Psoas muscle (tissue), 8 donors: ENCODE measurements at regions of chr12 and their contacts with region 1.

Region 1: DNA sequence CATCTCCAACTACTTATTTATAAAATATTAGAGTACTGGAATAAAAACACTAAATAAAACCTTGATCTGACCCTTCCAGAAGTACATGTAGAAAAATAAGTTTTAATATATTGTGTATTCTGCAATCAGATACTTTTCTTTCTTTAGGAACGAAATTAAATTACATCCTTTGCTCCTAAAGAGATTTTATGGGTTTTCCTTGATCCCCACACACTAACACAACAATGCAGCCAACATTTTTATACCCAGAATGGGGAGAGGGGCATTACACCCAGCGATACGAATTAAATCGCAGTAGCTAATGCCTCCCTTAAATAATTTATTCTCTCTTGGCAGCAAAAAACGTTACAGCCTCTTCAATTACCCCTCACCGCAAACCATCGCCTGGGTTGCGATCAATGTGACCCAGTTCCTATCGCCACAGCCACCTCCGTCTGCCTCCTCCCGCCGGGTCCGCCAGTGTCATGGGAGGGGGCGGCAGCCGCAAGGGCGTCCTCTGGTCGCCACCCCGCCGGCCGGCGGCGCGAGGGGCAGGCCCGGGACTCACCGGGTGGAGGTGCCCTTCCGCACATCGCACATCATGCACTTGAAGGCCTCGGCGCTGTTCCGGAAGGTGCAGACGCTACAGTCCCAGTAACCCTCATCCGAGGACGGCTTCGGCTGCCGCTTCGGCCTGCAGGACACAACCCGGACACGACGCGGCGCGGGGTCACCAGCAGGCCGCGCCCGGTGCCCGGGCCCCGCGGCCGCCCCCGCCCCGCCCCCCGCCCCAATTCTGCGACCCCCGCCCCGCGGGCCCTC is 796 bp downstream of the YAF2 start:
- DNase-seq: peak; percentile 80 to 90
- ATAC-seq: peak; percentile 74 to 82 (median 77)
- H3K4me3 ChIP-seq: peak overlapping the region; percentile 77
- H3K27ac ChIP-seq: peak overlapping the region; percentile 96
- H3K4me1 ChIP-seq: peaks cover 37% of the 10 kb centered on the region
- H3K27me3 ChIP-seq: no peaks in the 10 kb centered on the region
- CTCF ChIP-seq: peak; percentile 49

Region 2: DNA sequence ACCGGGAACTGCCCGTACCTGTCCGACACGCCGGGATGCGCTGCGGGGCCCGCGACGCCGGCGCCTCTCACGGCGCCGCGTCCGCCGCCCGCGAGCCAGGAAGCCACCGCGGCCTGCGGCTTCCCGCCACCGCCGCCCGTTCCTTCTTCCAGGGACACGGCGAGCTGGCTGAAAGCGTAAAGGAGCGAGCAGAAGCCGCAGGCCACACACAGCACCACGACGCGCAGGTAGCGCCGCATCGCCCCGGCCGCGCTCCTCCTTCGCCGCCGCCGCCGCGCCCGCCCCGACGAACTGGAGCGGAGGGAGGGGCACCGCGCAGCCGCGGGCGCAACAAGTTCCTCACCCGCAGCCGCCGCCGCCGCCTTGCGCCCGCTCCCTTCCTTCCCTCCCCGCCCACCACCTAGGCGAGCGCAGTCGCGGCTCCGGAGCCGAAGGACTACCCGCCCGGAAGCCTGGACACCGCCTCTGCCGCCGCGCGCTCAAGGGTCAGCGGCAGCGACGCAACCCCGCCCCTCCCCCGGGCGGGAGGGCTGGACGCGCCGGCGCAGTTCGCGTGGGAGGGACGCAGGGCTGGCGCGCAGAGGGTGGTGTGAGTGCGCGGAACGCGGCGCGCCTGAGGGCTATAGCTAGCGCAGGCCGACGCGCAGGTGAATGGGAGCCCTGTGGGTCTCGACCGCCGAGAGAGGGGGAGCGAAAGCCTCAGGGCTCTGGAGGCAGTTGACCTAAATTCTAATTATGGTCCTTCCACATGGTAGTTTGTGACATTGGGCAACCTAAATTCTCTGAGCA is 92.7 kb before region 1 on chr12 and contains the start of gene GXYLT1:
- intact Hi-C with region 1: loop called (anchors 5 kb)
- DNase-seq: peak; percentile 94 to 97
- ATAC-seq: peak; percentile 95 to 98 (median 97)
- H3K4me3 ChIP-seq: peak within 1 kb of the TSS; percentile 73
- H3K27ac ChIP-seq: peak within 1 kb of the TSS; percentile 85
- H3K4me1 ChIP-seq: peaks cover 18% of the 10 kb centered on the region
- H3K27me3 ChIP-seq: no peaks in the 10 kb centered on the region
- CTCF ChIP-seq: no peak
- total RNA-seq, gene GXYLT1: 4.3 to 6.3 (median 5.1) TPM

Region 3: DNA sequence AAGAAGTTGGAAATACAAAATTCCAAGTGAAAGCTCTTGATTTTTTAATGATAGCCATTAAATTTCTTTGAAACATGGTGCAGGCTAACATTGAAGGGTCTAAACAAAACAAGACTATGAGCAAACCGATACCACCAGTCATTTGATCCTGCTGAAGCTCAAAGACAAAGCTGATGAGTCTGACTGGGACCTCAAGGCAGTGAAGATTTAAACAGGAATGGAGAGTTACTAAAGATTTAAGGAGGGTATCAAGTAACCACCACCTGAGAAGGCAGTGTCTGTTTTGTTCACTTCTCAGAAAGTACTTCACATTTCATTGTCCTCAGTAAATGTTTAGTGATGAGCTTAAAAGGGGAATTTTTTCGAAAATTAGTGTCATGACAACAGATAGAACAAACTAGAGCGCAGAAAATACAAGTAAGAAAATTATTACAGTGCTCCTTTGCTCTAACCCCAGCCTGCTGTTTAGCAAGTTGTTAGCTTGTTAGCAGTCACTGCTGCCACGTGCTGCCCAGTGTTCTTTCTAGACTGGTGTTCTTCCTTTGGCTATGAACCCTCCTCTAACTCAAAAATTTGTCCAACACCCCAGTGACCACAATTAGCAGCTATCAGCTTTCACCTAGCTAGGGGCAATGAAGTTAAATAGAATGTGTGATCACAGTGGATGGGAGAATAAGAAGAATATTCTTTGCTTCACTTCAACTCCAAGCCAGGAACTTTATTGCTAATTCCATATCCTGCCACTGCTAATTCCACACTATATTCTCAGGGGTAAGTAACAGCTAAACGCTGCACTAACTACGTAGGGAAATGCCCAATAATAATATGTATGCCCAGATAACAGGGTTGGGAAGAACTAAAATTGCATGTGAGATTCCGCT is 40.3 kb before region 1 on chr12:
- intact Hi-C with region 1: loop called in 1 of 2 experiments (anchors 5 kb)
- DNase-seq: no peak
- ATAC-seq: peak in 2 of 4 donors; percentile 58 to 65
- H3K4me3 ChIP-seq: no peak overlapping the region
- H3K27ac ChIP-seq: peak overlapping the region; percentile 33
- H3K4me1 ChIP-seq: peaks cover 11% of the 10 kb centered on the region
- H3K27me3 ChIP-seq: no peaks in the 10 kb centered on the region
- CTCF ChIP-seq: no peak

Region 4: GRCh38 chr12:42267455-42268190 is 30.4 kb after region 1 on chr12:
- intact Hi-C with region 1: no loop called
- DNase-seq: no peak
- ATAC-seq: no peak
- H3K4me3 ChIP-seq: no peak overlapping the region
- H3K27ac ChIP-seq: no peak overlapping the region
- H3K4me1 ChIP-seq: no peaks in the 10 kb centered on the region
- H3K27me3 ChIP-seq: no peaks in the 10 kb centered on the region
- CTCF ChIP-seq: no peak

Region 5: GRCh38 chr12:42325653-42326474 is 88.6 kb after region 1 on chr12 and contains the starts of genes PPHLN1 and ZCRB1:
- intact Hi-C with region 1: loop called in 1 of 2 experiments (anchors 2 kb)
- DNase-seq: peak; percentile 84 to 91
- ATAC-seq: peak; percentile 93 to 98 (median 96)
- H3K4me3 ChIP-seq: peak within 1 kb of the TSS; percentile 84
- H3K27ac ChIP-seq: peak within 1 kb of the TSS; percentile 85
- H3K4me1 ChIP-seq: peaks cover 11% of the 10 kb centered on the region
- H3K27me3 ChIP-seq: no peaks in the 10 kb centered on the region
- CTCF ChIP-seq: no peak
- total RNA-seq, gene PPHLN1: 27.0 to 43.8 (median 30.2) TPM
- total RNA-seq, gene ZCRB1: 52.5 to 66.4 (median 57.5) TPM

Region 6: DNA sequence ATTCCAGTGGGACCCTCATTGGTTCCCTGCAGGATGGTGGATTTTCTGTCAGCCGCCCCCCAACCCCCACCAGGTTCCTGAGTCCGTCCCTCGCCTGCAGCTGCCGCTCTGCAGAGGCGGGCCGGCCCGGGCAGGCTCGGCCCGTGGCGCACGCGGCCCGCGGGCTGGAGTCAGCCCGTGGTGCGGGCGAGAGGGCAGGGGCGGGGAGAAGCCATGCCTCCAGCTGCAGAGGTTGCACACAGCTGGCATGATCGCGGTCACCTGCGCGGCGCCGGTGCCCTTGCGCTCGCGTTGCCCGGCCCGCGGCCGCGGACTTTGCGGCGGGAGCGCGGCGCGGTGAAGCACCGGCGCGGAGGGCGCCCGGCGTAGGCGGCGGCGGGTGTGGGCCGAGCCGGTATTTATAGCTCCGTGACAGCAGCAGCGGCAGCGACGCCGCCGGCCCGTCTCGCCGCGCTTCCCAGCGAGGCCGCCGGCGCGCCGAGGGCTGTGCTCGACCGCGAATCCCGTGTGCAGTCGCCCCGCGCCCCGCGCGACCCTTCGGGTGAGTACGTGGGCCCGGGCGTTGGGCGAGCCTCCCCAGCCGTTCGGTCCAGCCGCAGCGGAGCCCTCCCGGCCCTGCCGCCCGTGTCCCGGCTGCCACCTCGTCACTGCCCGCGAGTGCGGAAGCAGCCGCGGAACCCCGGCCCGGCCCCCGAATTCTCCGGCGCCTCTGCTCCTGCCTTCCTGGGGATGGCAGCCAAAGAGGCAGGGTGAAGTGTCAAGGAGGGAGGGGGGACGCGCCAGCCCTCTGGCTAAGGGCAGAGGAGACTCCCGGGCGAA is 1598.6 kb after region 1 on chr12 and contains the start of gene TMEM117:
- intact Hi-C with region 1: loop called in 1 of 2 experiments (anchors 5 kb)
- DNase-seq: peak; percentile 81 to 89
- ATAC-seq: peak; percentile 95 to 96 (median 95)
- H3K4me3 ChIP-seq: peak within 1 kb of the TSS; percentile 93
- H3K27ac ChIP-seq: peak within 1 kb of the TSS; percentile 98
- H3K4me1 ChIP-seq: peaks cover 16% of the 10 kb centered on the region
- H3K27me3 ChIP-seq: no peaks in the 10 kb centered on the region
- CTCF ChIP-seq: no peak
- total RNA-seq, gene TMEM117: 3.3 to 4.7 (median 4.2) TPM